Endothelial cell of umbilical vein (primary cell): ENCODE measurements at regions of chr16 and their contacts with region 1.

Region 1: DNA sequence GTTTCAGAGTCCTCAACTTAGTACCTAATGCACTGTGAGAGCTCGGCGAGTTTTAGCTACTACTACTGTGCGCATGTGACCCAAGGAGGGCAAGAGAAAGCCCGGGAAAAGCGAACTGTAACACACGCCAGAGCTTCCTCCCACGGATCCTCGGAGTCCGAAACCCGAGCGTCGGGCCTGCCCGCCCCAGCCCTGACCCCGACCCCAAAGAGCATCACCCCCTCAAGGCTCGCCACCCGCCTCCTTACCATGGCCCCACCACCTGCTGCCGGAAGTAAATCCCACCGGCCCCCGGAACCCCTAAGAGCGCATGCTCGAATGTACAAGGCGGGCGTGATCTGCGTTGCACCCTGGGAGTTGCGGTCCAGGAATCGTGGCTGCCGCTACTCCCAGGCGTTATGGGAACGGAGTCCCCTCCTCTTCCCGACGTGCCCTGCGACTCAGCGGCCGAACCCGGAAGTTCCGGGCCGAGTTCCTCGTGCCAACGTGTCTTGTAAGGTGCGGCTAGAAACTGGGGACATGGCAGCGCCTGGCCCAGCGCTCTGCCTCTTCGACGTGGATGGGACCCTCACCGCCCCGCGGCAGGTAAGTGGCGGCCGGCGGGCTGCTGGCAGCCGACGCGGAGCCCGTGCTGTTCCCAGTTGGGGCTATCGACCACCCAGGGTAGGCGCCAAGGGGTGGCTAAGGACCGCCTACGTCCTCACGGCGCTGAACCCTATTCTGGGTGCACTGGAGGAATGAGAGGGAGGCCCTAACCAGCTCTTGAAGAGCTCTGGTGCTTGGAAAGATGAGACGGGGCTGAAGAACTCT is at the starts of genes PMM2 and TMEM186:
- DNase-seq: peak; percentile 98
- H3K4me3 ChIP-seq: peak within 1 kb of the TSS; percentile 65 to 95 (median 83)
- H3K27ac ChIP-seq: peak within 1 kb of the TSS; percentile 62
- H3K4me1 ChIP-seq: peaks cover 25% of the 10 kb centered on the region
- H3K27me3 ChIP-seq: no peaks in the 10 kb centered on the region
- CTCF ChIP-seq: no peak
- POLR2A ChIP-seq: peak; percentile 86
- total RNA-seq, gene PMM2: 61.3 and 62.8 TPM in 2 replicates
- total RNA-seq, gene TMEM186: 8.3 and 9.6 TPM in 2 replicates

Region 2: GRCh38 chr16:8594149-8594666 is 203.4 kb before region 1 on chr16:
- CTCF ChIA-PET with region 1: no interaction called
- POLR2A ChIA-PET with region 1: no interaction called
- dilution Hi-C with region 1: no loop called
- intact Hi-C with region 1: no loop called
- DNase-seq: no peak
- H3K4me3 ChIP-seq: no peak overlapping the region
- H3K27ac ChIP-seq: no peak overlapping the region
- H3K4me1 ChIP-seq: no peaks in the 10 kb centered on the region
- H3K27me3 ChIP-seq: peaks cover 7 to 13% of the 10 kb centered on the region in 2 experiments
- CTCF ChIP-seq: no peak
- POLR2A ChIP-seq: no peak

Region 3: DNA sequence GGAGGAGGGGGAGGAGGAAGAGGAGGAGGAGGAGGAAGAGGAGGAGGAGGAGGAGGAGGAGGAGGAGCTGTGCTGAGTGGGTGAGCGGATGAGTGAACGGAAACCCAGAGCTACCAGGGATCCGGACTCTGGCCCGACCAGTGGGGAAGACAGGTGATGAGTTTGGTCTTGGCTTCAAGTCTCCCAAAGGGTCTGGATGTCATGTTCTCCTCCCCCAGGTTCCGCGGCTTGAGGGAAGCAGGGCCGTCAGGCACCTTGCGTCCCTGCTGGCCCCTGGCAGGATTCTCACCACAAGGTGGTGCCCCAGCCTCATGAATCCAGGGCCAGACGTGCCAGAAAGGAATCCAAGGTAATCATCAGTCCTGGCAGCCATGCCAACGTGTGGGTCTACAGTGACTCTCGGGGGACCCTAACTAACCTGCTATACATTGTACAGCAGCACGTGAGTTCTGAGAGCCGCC is 136.7 kb before region 1 on chr16:
- CTCF ChIA-PET with region 1: interaction called, 4 read pairs
- POLR2A ChIA-PET with region 1: no interaction called
- dilution Hi-C with region 1: no loop called
- intact Hi-C with region 1: loop called (anchors 1 kb)
- DNase-seq: peak; percentile 53
- H3K4me3 ChIP-seq: no peak overlapping the region
- H3K27ac ChIP-seq: no peak overlapping the region
- H3K4me1 ChIP-seq: no peaks in the 10 kb centered on the region
- H3K27me3 ChIP-seq: peaks cover 0 to 6% of the 10 kb centered on the region in 2 experiments
- CTCF ChIP-seq: peak; percentile 65 to 75
- POLR2A ChIP-seq: no peak

Region 4: DNA sequence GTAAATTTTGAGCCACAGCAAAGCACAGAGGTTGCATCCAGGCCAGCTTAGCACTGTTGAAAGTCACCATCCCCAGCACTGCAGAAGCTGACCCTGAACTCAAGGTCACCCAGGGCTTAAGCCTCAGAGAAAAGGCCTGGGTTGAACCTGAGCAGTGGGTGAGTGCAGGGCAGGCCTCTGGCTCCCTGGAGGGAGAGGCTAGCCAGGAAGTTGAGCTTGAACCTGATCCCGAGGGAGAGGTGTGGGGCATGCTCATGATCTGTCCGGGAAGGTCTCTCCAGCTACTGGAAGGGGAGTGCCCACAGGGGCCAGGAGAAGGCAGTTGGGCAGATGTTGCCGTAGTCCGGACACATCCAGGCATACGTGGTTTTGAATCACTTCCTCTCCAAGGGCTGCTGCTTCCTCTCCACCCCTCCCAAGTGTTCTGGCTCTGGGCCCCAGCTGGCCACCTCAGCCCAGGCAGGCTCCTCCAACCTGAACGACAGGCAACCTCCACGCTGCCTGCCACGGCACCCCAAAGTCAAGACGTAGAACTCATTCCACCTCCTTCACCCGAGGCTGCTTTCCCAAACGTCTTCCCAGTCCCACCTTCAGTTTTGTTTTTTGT is 52.8 kb after region 1 on chr16:
- CTCF ChIA-PET with region 1: no interaction called
- POLR2A ChIA-PET with region 1: no interaction called
- dilution Hi-C with region 1: no loop called
- intact Hi-C with region 1: no loop called
- DNase-seq: peak; percentile 87
- H3K4me3 ChIP-seq: no peak overlapping the region
- H3K27ac ChIP-seq: peak overlapping the region; percentile 27
- H3K4me1 ChIP-seq: peaks cover 23% of the 10 kb centered on the region
- H3K27me3 ChIP-seq: no peaks in the 10 kb centered on the region
- CTCF ChIP-seq: no peak
- POLR2A ChIP-seq: peak; percentile 62

Region 5: DNA sequence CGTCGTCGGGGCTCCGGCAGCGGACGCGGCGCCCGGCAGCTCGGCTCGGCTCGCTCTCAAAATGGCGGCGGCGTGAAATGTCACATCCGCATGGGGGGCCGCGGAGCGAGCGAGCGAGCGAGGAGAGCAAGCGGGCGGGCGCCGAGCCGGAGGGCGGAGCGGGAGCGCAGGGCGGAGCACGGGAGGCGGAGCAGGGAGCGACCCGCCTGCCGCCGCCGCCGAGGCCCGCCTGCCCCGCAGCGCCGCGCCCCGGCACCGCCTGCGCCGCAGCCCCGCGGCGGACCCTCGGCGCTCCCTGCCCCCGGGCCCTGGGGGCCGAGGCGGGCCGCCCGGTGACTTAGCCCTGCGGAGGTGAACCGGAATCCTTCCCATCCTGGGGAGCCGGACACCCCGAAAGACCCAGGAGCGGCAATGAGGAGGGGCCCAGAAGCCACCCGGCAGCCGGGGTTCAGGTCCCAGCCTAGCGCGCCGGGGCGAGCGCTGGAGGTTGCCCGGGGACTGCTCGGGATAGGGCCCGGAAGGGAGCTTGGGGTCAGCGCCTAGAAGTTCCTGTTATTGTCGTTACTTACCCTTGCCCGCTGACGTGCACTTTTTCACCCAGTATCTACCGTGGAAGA is 166.4 kb after region 1 on chr16 and contains the start of gene USP7:
- CTCF ChIA-PET with region 1: no interaction called
- POLR2A ChIA-PET with region 1: no interaction called
- dilution Hi-C with region 1: no loop called
- intact Hi-C with region 1: loop called (anchors 1 kb)
- DNase-seq: peak; percentile 88
- H3K4me3 ChIP-seq: peak within 1 kb of the TSS; percentile 45 to 82 (median 64)
- H3K27ac ChIP-seq: peak within 1 kb of the TSS; percentile 51
- H3K4me1 ChIP-seq: peaks cover 34% of the 10 kb centered on the region
- H3K27me3 ChIP-seq: no peaks in the 10 kb centered on the region
- CTCF ChIP-seq: no peak
- POLR2A ChIP-seq: peak; percentile 68
- total RNA-seq, gene USP7: 130 and 138 TPM in 2 replicates

Region 6: GRCh38 chr16:9151597-9151996 is 354.0 kb after region 1 on chr16:
- CTCF ChIA-PET with region 1: no interaction called
- POLR2A ChIA-PET with region 1: no interaction called
- dilution Hi-C with region 1: no loop called
- intact Hi-C with region 1: no loop called
- DNase-seq: no peak
- H3K4me3 ChIP-seq: no peak overlapping the region
- H3K27ac ChIP-seq: no peak overlapping the region
- H3K4me1 ChIP-seq: no peaks in the 10 kb centered on the region
- H3K27me3 ChIP-seq: no peaks in the 10 kb centered on the region
- CTCF ChIP-seq: no peak
- POLR2A ChIP-seq: no peak